Naive thymus-derived CD4-positive, alpha-beta T cell (primary cell): ENCODE measurements at regions of chr3 and their contacts with region 1.

Region 1: DNA sequence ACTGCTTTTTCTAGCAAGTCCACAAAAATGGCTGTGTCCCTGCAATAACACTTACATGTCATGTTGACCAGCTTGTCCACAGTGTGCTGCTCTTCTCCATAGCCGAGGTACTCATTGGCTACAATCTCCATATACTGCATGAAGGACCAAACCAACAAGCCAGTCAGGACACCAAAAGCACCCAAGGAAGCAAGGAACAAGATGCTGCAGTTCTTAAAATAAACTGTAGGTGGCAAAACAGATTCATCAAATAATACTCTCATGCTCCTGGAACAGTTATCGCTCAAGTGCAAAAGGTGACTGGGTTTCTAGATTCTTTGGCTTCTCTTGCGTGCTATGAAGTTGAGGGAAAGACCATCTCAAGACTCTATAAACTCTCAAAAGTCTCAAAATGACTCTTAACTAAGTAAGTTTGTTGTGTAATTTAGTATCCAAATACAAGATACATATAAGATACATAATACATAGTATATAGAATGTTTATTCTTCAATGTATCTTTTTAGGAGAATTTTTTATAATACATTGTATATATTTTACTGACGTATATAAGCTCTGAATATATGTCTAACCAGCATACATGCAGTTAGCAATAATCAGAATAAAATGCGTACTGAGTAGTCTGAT is 57.0 kb downstream of the NEK10 start:
- DNase-seq: peak in 7 of 9 donors; percentile 18 to 61 (median 44)
- ATAC-seq: peak; percentile 70
- H3K4me3 ChIP-seq: no peak overlapping the region
- H3K4me3 Mint-ChIP-seq: no peak overlapping the region
- H3K27ac ChIP-seq: no peak overlapping the region
- H3K27ac Mint-ChIP-seq: no peak overlapping the region
- H3K4me1 ChIP-seq: no peaks in the 10 kb centered on the region
- H3K4me1 Mint-ChIP-seq: peaks cover 0 to 4% (median 0%) of the 10 kb centered on the region in 7 donors
- H3K27me3 ChIP-seq: no peaks in the 10 kb centered on the region
- H3K27me3 Mint-ChIP-seq: peaks cover 0 to 20% (median 8%) of the 10 kb centered on the region in 5 donors

Region 2: GRCh38 chr3:26562021-26562768 is 750.0 kb before region 1 on chr3:
- CTCF ChIA-PET with region 1: no interaction called
- POLR2A ChIA-PET with region 1: no interaction called
- intact Hi-C with region 1: no loop called
- DNase-seq: no peak
- ATAC-seq: no peak
- H3K4me3 ChIP-seq: no peak overlapping the region
- H3K4me3 Mint-ChIP-seq: no peak overlapping the region
- H3K27ac ChIP-seq: no peak overlapping the region
- H3K27ac Mint-ChIP-seq: no peak overlapping the region
- H3K4me1 ChIP-seq: no peaks in the 10 kb centered on the region
- H3K4me1 Mint-ChIP-seq: no peaks in the 10 kb centered on the region
- H3K27me3 ChIP-seq: no peaks in the 10 kb centered on the region
- H3K27me3 Mint-ChIP-seq: no peaks in the 10 kb centered on the region

Region 3: DNA sequence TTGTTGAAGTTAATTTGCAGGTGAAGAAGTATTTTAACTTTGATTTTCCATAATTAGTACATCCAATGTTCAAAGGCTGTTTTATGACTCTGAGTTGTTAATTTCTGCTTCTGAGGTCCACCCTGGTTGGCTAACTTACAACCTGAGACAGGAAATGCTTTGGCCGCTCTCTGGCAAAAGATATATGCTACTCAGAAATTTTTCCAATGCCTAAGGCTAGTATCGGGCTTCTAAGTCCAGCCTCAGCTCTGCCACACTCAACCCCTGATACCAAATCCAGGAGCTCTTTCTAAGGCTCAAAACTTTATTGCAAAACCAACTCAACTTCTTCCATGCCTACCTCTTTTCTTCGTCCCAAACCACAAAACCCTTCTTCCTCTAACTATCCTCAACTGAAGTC is 135.9 kb before region 1 on chr3:
- CTCF ChIA-PET with region 1: no interaction called
- POLR2A ChIA-PET with region 1: no interaction called
- intact Hi-C with region 1: no loop called
- DNase-seq: no peak
- ATAC-seq: no peak
- H3K4me3 ChIP-seq: no peak overlapping the region
- H3K4me3 Mint-ChIP-seq: no peak overlapping the region
- H3K27ac ChIP-seq: no peak overlapping the region
- H3K27ac Mint-ChIP-seq: no peak overlapping the region
- H3K4me1 ChIP-seq: no peaks in the 10 kb centered on the region
- H3K4me1 Mint-ChIP-seq: no peaks in the 10 kb centered on the region
- H3K27me3 ChIP-seq: no peaks in the 10 kb centered on the region
- H3K27me3 Mint-ChIP-seq: no peaks in the 10 kb centered on the region

Region 4: GRCh38 chr3:27357665-27358258 is 45.6 kb after region 1 on chr3:
- CTCF ChIA-PET with region 1: no interaction called
- POLR2A ChIA-PET with region 1: no interaction called
- intact Hi-C with region 1: loop called (anchors 1 to 5 kb)
- DNase-seq: peak in 8 of 9 donors; percentile 19 to 56 (median 41)
- ATAC-seq: peak; percentile 93
- H3K4me3 ChIP-seq: no peak overlapping the region
- H3K4me3 Mint-ChIP-seq: no peak overlapping the region
- H3K27ac ChIP-seq: no peak overlapping the region
- H3K27ac Mint-ChIP-seq: no peak overlapping the region
- H3K4me1 ChIP-seq: peaks cover 13 to 18% of the 10 kb centered on the region in 2 donors
- H3K4me1 Mint-ChIP-seq: peaks cover 0 to 31% (median 25%) of the 10 kb centered on the region in 7 donors
- H3K27me3 ChIP-seq: no peaks in the 10 kb centered on the region
- H3K27me3 Mint-ChIP-seq: peaks cover 0 to 20% (median 0%) of the 10 kb centered on the region in 5 donors

Region 5: GRCh38 chr3:27431116-27431515 is 119.0 kb after region 1 on chr3:
- CTCF ChIA-PET with region 1: no interaction called
- POLR2A ChIA-PET with region 1: no interaction called
- intact Hi-C with region 1: no loop called
- DNase-seq: no peak
- ATAC-seq: no peak
- H3K4me3 ChIP-seq: no peak overlapping the region
- H3K4me3 Mint-ChIP-seq: no peak overlapping the region
- H3K27ac ChIP-seq: no peak overlapping the region
- H3K27ac Mint-ChIP-seq: no peak overlapping the region
- H3K4me1 ChIP-seq: no peaks in the 10 kb centered on the region
- H3K4me1 Mint-ChIP-seq: peaks cover 0 to 6% (median 0%) of the 10 kb centered on the region in 7 donors
- H3K27me3 ChIP-seq: no peaks in the 10 kb centered on the region
- H3K27me3 Mint-ChIP-seq: no peaks in the 10 kb centered on the region